H1 (cell line): ENCODE measurements at regions of chrX and their contacts with region 1.

Region 1: GRCh38 chrX:151753313-151754041 is 18.9 kb downstream of the CNGA2 start:
- DNase-seq: peak in 1 of 2 experiments; percentile 64
- H3K4me3 ChIP-seq: no peak overlapping the region
- H3K27ac ChIP-seq: no peak overlapping the region
- H3K4me1 ChIP-seq: 0 out of 7 replicates have a peak, but pooled peaks cover 0 to 2% (median 0%) of the 10 kb centered on the region in 4 experiments
- H3K27me3 ChIP-seq: 0 out of 7 replicates have a peak, but pooled peaks cover 0 to 2% (median 0%) of the 10 kb centered on the region in 4 experiments
- CTCF ChIP-seq: peak; percentile 70 to 91 (median 77)
- EP300 ChIP-seq: no peak
- POLR2A ChIP-seq: no peak
- RAD21 ChIP-seq: peak; percentile 87 to 89

Region 2: GRCh38 chrX:151737494-151737893 is 16.0 kb before region 1 on chrX:
- CTCF ChIA-PET with region 1: interaction called, 15 read pairs
- POLR2A ChIA-PET with region 1: no interaction called
- DNase-seq: no peak
- H3K4me3 ChIP-seq: no peak overlapping the region
- H3K27ac ChIP-seq: no peak overlapping the region
- H3K4me1 ChIP-seq: no peaks in the 10 kb centered on the region
- H3K27me3 ChIP-seq: no peaks in the 10 kb centered on the region
- CTCF ChIP-seq: no peak
- EP300 ChIP-seq: no peak
- POLR2A ChIP-seq: no peak
- RAD21 ChIP-seq: no peak

Region 3: GRCh38 chrX:151773434-151773833 is 20.0 kb after region 1 on chrX:
- CTCF ChIA-PET with region 1: interaction called, 10 read pairs
- POLR2A ChIA-PET with region 1: no interaction called
- DNase-seq: no peak
- H3K4me3 ChIP-seq: no peak overlapping the region
- H3K27ac ChIP-seq: no peak overlapping the region
- H3K4me1 ChIP-seq: no peaks in the 10 kb centered on the region
- H3K27me3 ChIP-seq: no peaks in the 10 kb centered on the region
- CTCF ChIP-seq: peak; percentile 32 to 54 (median 48)
- EP300 ChIP-seq: no peak
- POLR2A ChIP-seq: no peak
- RAD21 ChIP-seq: peak in 1 of 2 experiments; percentile 30; a peak in 1 of 4 replicates

Region 4: DNA sequence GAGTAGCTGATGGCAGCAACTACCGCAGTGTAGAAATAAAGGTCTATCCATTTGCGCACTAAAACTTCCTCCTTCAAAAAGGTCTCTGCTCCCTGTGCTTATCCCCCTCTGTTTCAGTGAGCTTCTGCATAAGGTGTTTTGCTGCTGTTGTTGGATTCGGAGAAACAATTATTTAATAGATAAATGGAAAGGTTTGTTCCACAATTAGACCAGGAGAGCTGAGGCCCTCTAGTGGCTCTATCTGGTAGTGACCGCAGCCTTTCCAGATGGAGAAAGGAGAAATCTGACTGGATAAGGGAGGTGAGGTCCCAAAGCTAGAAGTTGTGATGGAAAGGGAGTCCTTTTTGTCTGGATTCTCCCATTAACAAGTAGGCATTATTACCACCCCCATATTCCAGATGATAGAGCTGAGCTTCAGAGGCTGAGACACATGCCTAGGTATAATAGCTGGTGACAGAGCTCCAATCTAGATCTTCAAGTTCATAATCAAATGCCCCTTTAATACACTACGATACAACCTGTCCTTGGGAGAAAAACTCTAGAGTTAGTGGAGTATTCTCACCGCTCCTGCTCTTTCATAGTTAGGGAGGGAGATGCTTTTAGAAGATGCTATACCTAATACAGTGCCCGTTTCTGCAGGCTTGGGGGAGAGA is 879.1 kb after region 1 on chrX:
- CTCF ChIA-PET with region 1: interaction called, 23 read pairs
- POLR2A ChIA-PET with region 1: no interaction called
- DNase-seq: peak in 1 of 2 experiments; percentile 80
- H3K4me3 ChIP-seq: no peak overlapping the region
- H3K27ac ChIP-seq: no peak overlapping the region
- H3K4me1 ChIP-seq: peaks cover 0 to 6% (median 2%) of the 10 kb centered on the region in 4 experiments; a peak in 2 of 7 replicates
- H3K27me3 ChIP-seq: no peaks in the 10 kb centered on the region
- CTCF ChIP-seq: peak in 2 of 3 experiments; percentile 52 to 64; a peak in 2 of 4 replicates
- EP300 ChIP-seq: no peak
- POLR2A ChIP-seq: no peak
- RAD21 ChIP-seq: peak; percentile 68 to 74